PC-3 (cell line): ENCODE measurements at regions of chr14 and their contacts with region 1.

Region 1: GRCh38 chr14:103724116-103724515 is 8.5 kb downstream of the ZFYVE21 start:
- DNase-seq: no peak
- ATAC-seq: no peak
- H3K4me3 ChIP-seq: no peak overlapping the region
- H3K27ac ChIP-seq: no peak overlapping the region
- H3K4me1 ChIP-seq: peaks cover 14% of the 10 kb centered on the region
- H3K27me3 ChIP-seq: no peaks in the 10 kb centered on the region
- CTCF ChIP-seq: no peak

Region 2: DNA sequence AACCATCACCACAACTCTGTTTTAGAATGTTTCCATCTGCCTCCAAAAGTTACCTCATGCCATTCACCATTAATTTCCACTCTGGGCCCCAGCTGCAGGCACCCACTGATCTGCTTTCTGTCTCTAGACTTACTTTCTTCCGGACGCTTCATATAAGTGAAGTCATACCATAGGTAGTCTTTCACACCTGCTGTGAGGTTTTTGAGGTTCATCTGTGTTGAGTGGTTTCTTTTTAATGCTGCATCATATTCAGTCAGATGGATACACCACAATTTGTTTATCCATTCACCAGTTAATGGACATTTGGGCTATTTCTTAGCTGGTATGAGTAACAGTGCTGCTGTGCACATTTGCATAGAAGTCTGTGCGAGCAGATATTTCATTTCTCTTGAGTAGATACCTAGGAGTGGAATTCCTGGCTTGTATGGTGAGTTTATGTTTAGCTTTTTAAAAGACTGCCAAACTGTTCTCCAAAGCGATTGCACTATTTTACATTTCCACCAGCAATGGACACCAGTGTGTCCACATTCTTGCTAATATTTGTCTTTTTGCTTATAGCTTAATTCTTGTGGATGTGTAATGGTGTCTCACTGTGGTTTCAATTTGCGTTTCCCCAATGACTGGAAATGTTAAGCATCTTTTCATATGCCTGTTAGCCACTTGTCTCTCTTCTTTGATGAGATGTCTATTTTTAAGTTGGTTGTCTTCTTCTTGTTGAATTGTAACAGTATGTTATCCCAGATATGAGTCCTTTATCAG is 39.8 kb after region 1 on chr14:
- CTCF ChIA-PET with region 1: no interaction called
- POLR2A ChIA-PET with region 1: interaction called, 17 read pairs
- intact Hi-C with region 1: no loop called
- DNase-seq: no peak
- ATAC-seq: no peak
- H3K4me3 ChIP-seq: no peak overlapping the region
- H3K27ac ChIP-seq: no peak overlapping the region
- H3K4me1 ChIP-seq: peaks cover 4% of the 10 kb centered on the region; the same call in 1 of the 2 replicates
- H3K27me3 ChIP-seq: no peaks in the 10 kb centered on the region
- CTCF ChIP-seq: no peak